Upper lobe of right lung (tissue), 1 donor: ENCODE measurements at regions of chr15 and their contacts with region 1.

Region 1: DNA sequence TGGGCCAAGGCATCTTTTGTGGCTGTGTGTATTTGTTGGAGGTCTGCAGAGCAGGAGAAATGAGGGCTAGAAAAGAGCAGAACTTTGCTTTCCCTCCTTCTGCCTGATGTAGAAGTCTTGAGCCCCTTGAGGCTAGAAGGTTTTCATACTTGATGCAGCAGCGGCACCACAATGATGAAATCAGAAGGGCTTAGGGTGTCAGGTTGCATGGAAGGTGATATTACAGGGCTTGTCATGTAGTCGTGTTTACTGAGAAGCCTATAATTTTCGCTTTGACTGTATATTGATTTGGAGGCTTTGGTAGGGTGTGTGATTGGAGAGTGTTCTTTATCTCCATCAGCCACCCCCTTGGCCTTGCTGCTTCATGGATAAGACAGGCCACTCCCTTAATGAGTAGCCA is 339.8 kb downstream of the THSD4 start:
- DNase-seq: no peak
- ATAC-seq: no peak
- H3K4me3 ChIP-seq: no peak overlapping the region
- H3K27ac ChIP-seq: no peak overlapping the region
- H3K4me1 ChIP-seq: no peaks in the 10 kb centered on the region
- H3K27me3 ChIP-seq: no peaks in the 10 kb centered on the region
- CTCF ChIP-seq: no peak

Region 2: GRCh38 chr15:71114896-71115554 is 340.1 kb before region 1 on chr15 and contains the start of gene THSD4:
- intact Hi-C with region 1: loop called (anchors 10 kb)
- DNase-seq: peak; percentile 93
- ATAC-seq: peak; percentile 89
- H3K4me3 ChIP-seq: peak within 1 kb of the TSS; percentile 64
- H3K27ac ChIP-seq: peak within 1 kb of the TSS; percentile 78
- H3K4me1 ChIP-seq: no peaks in the 10 kb centered on the region
- H3K27me3 ChIP-seq: no peaks in the 10 kb centered on the region
- CTCF ChIP-seq: peak; percentile 97
- total RNA-seq, gene THSD4: 25.6 TPM

Region 3: DNA sequence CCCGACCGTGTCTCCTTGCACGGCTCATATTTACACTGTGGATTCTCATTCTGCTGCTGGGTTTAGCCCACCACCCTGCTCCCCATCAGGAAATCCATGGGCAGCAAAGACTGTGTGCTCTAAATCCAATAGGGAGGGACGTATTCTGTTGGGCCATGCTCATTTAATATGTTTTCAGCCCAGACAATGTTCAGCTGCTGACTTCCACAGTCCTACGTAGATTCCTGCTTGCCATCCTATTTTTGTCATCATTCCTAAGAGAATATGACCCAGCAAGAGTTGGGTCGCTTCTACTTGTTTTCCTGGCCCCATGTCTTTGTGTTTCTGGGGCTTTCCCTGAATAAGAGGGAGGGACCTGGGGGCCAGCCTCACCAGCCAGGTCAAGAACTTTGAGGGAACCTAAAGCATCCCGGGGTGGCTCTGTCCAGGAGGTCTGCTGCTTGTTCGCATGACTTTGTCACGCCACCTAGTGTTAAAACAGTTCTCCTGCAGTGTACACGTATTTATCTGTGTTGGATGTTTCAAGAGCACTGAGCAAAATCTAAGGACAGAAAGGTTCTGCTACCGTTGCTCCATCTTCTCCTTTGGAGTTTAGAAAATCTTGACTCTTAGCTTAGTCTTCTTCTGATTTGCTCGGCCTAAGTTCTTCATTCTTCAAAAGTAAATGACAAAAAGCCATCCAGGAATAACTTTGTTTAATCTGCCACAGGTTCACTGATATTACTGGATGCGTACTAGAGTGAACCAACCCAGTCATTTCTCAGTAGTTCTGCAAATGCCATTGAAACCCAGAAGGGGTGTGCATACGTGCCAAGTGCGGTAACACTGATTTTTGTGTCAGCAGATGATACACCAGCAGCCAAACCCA is 275.4 kb after region 1 on chr15:
- intact Hi-C with region 1: loop called (anchors 10 kb)
- DNase-seq: no peak
- ATAC-seq: peak; percentile 86
- H3K4me3 ChIP-seq: no peak overlapping the region
- H3K27ac ChIP-seq: no peak overlapping the region
- H3K4me1 ChIP-seq: peaks cover 6% of the 10 kb centered on the region
- H3K27me3 ChIP-seq: no peaks in the 10 kb centered on the region
- CTCF ChIP-seq: peak; percentile 79